ENCODE measurements at regions of chr17 and their contacts with region 1.

Region 1: DNA sequence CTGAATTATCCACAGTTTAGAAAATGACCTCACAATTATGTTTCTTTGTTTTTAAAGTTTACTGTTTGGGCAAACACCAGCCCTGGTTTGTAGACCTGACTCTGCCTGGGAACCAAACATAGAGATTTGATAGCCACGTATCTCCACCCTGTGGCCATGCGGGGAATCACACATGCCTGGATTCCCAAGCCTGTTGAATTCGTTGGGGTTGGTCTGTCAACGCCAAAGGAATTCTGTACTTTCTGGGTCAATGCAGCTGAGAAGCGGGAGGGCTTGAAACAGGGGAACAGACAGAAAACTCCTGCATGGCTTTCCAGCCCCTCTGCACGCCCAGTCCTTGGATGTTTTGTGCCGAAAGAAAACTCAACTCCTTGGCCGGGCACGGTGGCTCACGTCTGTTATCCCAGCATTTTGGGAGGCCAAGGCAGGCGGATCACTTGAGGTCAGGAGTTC is 27.0 kb downstream of the CD300A start:
- DNase-seq: peak; percentile 49 to 68
- H3K4me3 ChIP-seq: no peak overlapping the region
- H3K27ac ChIP-seq: no peak overlapping the region
- H3K4me1 ChIP-seq: no peaks in the 10 kb centered on the region
- H3K27me3 ChIP-seq: peaks cover 56% of the 10 kb centered on the region
- CTCF ChIP-seq: peak; percentile 92

Region 2: DNA sequence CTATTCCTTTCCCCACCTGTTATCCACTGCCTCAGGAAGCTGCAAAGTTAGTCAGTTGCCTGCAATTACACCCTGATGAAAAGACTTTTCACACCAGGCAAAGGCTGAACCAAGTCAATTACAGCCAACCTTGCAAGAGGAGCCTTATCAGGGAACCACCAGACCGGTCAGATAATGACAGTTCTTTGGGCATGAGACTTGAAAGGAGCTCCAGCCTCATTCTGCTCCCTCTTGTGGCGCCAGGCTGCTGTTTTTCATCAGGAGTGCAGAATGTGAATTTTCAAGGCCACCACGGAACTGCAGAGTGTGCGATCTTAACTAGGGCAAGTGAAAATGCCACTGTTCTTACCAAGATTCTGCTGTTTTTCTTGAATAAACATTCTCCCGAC is 196.9 kb before region 1 on chr17:
- CTCF ChIA-PET with region 1: no interaction called
- POLR2A ChIA-PET with region 1: no interaction called
- intact Hi-C with region 1: loop called (anchors 2 kb)
- DNase-seq: peak; percentile 31 to 51
- H3K4me3 ChIP-seq: no peak overlapping the region
- H3K27ac ChIP-seq: no peak overlapping the region
- H3K4me1 ChIP-seq: no peaks in the 10 kb centered on the region
- H3K27me3 ChIP-seq: peaks cover 42% of the 10 kb centered on the region; the same call in 1 of the 2 replicates
- CTCF ChIP-seq: peak; percentile 49

Region 3: GRCh38 chr17:74368092-74369081 is 125.0 kb before region 1 on chr17:
- CTCF ChIA-PET with region 1: interaction called, 3 read pairs
- POLR2A ChIA-PET with region 1: no interaction called
- intact Hi-C with region 1: loop called (anchors 2 kb)
- DNase-seq: peak in 1 of 2 experiments; percentile 60
- H3K4me3 ChIP-seq: no peak overlapping the region
- H3K27ac ChIP-seq: no peak overlapping the region
- H3K4me1 ChIP-seq: no peaks in the 10 kb centered on the region
- H3K27me3 ChIP-seq: peaks cover 80% of the 10 kb centered on the region
- CTCF ChIP-seq: peak; percentile 97

Region 4: GRCh38 chr17:74379495-74380085 is 113.8 kb before region 1 on chr17:
- CTCF ChIA-PET with region 1: interaction called, 3 read pairs
- POLR2A ChIA-PET with region 1: no interaction called
- intact Hi-C with region 1: loop called (anchors 1 kb)
- DNase-seq: peak; percentile 56 to 90
- H3K4me3 ChIP-seq: no peak overlapping the region
- H3K27ac ChIP-seq: no peak overlapping the region
- H3K4me1 ChIP-seq: peaks cover 17% of the 10 kb centered on the region
- H3K27me3 ChIP-seq: peaks cover 47% of the 10 kb centered on the region
- CTCF ChIP-seq: peak; percentile 95

Region 5: GRCh38 chr17:74513987-74514631 is 20.7 kb after region 1 on chr17:
- CTCF ChIA-PET with region 1: no interaction called
- POLR2A ChIA-PET with region 1: no interaction called
- intact Hi-C with region 1: no loop called
- DNase-seq: peak in 1 of 2 experiments; percentile 11
- H3K4me3 ChIP-seq: no peak overlapping the region
- H3K27ac ChIP-seq: no peak overlapping the region
- H3K4me1 ChIP-seq: no peaks in the 10 kb centered on the region
- H3K27me3 ChIP-seq: peaks cover 28% of the 10 kb centered on the region
- CTCF ChIP-seq: no peak